Activated CD4-positive, alpha-beta memory T cell treated with anti-CD3 and anti-CD28 coated beads, Interleukin-2, amount 10 ng/mL, durations not matched to agents 7 days and 5 days (primary cell): ENCODE measurements at regions of chr6 and their contacts with region 1.

Region 1: GRCh38 chr6:26223650-26224546 is 136.7 kb downstream of the HFE start:
- DNase-seq: peak; percentile 72
- H3K4me3 Mint-ChIP-seq: no peak overlapping the region
- H3K27ac Mint-ChIP-seq: no peak overlapping the region
- H3K4me1 Mint-ChIP-seq: peaks cover 31% of the 10 kb centered on the region
- H3K27me3 Mint-ChIP-seq: no peaks in the 10 kb centered on the region

Region 2: GRCh38 chr6:26183581-26184366 is 40.1 kb before region 1 on chr6:
- CTCF ChIA-PET with region 1: no interaction called
- POLR2A ChIA-PET with region 1: interaction called, 32 read pairs
- DNase-seq: peak; percentile 78
- H3K4me3 Mint-ChIP-seq: peak overlapping the region; percentile 75
- H3K27ac Mint-ChIP-seq: peak overlapping the region; percentile 92
- H3K4me1 Mint-ChIP-seq: peaks cover 71% of the 10 kb centered on the region
- H3K27me3 Mint-ChIP-seq: no peaks in the 10 kb centered on the region

Region 3: GRCh38 chr6:26204332-26205165 is 19.3 kb before region 1 on chr6:
- CTCF ChIA-PET with region 1: interaction called, 6 read pairs
- POLR2A ChIA-PET with region 1: interaction called, 441 read pairs
- DNase-seq: peak; percentile 90
- H3K4me3 Mint-ChIP-seq: no peak overlapping the region
- H3K27ac Mint-ChIP-seq: no peak overlapping the region
- H3K4me1 Mint-ChIP-seq: peaks cover 35% of the 10 kb centered on the region
- H3K27me3 Mint-ChIP-seq: no peaks in the 10 kb centered on the region

Region 4: DNA sequence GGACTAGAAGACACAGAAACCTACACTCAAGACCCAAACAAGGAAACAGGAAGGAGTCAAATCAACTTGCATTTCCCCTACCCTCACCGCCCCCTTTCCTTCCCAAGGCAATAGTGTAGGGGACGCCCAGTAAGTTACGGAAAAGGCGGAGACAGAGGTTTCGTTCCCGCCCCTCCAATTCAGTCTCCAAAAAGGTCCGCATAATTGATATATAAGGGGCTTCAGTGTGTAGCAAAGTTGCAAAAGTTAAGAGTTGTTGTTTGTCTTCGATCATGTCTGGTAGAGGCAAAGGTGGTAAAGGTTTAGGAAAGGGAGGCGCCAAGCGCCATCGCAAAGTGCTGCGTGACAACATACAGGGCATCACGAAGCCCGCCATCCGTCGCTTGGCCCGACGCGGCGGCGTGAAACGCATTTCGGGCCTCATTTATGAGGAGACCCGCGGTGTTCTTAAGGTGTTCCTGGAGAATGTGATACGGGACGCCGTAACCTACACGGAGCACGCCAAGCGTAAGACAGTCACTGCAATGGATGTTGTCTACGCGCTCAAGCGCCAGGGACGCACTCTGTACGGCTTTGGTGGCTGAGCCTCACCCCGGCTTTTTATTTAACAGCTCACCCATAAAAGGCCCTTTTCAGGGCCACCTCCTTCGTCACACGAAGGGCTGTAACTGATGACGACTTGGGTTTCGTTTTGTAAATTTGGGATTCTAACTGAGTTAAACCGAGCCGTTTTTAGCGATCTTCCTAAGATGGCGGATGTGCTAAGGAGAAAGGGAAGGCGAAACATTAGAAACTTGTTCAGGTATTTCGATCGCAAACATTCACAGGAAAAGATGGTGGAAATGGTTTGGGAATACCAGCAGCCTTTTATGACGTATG is 16.5 kb after region 1 on chr6:
- CTCF ChIA-PET with region 1: no interaction called
- POLR2A ChIA-PET with region 1: interaction called, 833 read pairs
- DNase-seq: peak; percentile 87
- H3K4me3 Mint-ChIP-seq: peak overlapping the region; percentile 71
- H3K27ac Mint-ChIP-seq: peak overlapping the region; percentile 94
- H3K4me1 Mint-ChIP-seq: peaks cover 42% of the 10 kb centered on the region
- H3K27me3 Mint-ChIP-seq: no peaks in the 10 kb centered on the region